ENCODE measurements at regions of chr15 and their contacts with region 1.

Region 1: GRCh38 chr15:90221246-90221900 is 12.4 kb downstream of the CIB1 start:
- DNase-seq: peak; percentile 39
- H3K4me3 Mint-ChIP-seq: no peak overlapping the region
- H3K27ac Mint-ChIP-seq: no peak overlapping the region
- H3K4me1 Mint-ChIP-seq: peaks cover 22% of the 10 kb centered on the region
- H3K27me3 Mint-ChIP-seq: no peaks in the 10 kb centered on the region

Region 2: GRCh38 chr15:90086868-90087268 is 134.5 kb before region 1 on chr15:
- CTCF ChIA-PET with region 1: interaction called, 11 read pairs
- POLR2A ChIA-PET with region 1: no interaction called
- DNase-seq: peak; percentile 63
- H3K4me3 Mint-ChIP-seq: no peak overlapping the region
- H3K27ac Mint-ChIP-seq: no peak overlapping the region
- H3K4me1 Mint-ChIP-seq: peaks cover 16% of the 10 kb centered on the region
- H3K27me3 Mint-ChIP-seq: no peaks in the 10 kb centered on the region

Region 3: DNA sequence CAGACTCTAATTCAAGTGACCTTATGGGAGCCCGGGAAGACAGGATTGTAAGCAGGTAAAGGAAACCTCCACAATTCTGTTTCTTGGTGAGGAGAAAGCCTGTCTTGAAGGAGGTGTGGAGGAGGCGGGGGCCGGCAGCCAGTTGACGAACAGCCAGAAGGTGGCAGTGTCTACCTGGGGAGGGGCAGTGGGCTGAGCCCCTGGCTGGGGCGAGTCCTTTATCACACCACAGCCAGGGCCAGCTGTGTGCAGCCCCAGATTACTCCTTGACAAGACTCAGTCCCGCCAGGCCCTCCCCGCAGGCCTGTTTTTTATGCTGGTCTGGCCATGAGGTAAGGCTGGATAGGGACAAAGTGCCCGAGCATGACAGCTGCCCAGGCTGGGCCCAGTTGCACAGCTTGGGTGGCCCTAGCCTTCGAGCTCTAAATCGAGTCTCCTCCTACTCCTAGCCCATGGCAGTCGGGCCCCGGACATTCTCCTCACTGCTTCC is 78.2 kb before region 1 on chr15:
- CTCF ChIA-PET with region 1: interaction called, 12 read pairs
- POLR2A ChIA-PET with region 1: interaction called, 3 read pairs
- DNase-seq: peak; percentile 76
- H3K4me3 Mint-ChIP-seq: no peak overlapping the region
- H3K27ac Mint-ChIP-seq: peak overlapping the region; percentile 69
- H3K4me1 Mint-ChIP-seq: peaks cover 47% of the 10 kb centered on the region
- H3K27me3 Mint-ChIP-seq: no peaks in the 10 kb centered on the region